ENCODE measurements at regions of chr1 and their contacts with region 1.

Region 1: GRCh38 chr1:229848752-229849677 is 218.0 kb upstream of the GALNT2 start:
- DNase-seq: no peak

Region 2: DNA sequence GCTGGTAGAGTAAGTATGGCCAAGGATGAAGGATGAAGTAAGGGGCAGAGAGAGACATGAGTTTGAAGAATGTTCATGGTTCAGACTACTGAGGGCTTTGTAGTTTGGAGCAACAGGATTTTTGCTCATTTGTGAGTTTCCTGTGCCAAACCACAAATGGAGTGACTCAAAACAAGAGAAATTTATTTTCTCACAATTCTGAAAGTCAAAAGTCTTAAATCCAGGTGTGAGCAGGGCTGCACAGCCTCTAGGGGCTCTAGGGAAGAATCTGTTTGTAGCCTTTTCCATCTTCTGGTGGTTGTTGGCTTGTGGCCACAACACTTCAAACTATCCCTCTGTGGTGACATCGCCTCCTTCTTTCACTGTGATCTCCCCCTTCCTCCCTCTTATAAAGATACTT is 1054.8 kb before region 1 on chr1:
- intact Hi-C with region 1: no loop called
- DNase-seq: no peak

Region 3: GRCh38 chr1:229756666-229757065 is 92.3 kb before region 1 on chr1:
- intact Hi-C with region 1: no loop called
- DNase-seq: no peak

Region 4: GRCh38 chr1:230084138-230084880 is 235.3 kb after region 1 on chr1:
- intact Hi-C with region 1: loop called (anchors 10 kb)
- DNase-seq: no peak

Region 5: DNA sequence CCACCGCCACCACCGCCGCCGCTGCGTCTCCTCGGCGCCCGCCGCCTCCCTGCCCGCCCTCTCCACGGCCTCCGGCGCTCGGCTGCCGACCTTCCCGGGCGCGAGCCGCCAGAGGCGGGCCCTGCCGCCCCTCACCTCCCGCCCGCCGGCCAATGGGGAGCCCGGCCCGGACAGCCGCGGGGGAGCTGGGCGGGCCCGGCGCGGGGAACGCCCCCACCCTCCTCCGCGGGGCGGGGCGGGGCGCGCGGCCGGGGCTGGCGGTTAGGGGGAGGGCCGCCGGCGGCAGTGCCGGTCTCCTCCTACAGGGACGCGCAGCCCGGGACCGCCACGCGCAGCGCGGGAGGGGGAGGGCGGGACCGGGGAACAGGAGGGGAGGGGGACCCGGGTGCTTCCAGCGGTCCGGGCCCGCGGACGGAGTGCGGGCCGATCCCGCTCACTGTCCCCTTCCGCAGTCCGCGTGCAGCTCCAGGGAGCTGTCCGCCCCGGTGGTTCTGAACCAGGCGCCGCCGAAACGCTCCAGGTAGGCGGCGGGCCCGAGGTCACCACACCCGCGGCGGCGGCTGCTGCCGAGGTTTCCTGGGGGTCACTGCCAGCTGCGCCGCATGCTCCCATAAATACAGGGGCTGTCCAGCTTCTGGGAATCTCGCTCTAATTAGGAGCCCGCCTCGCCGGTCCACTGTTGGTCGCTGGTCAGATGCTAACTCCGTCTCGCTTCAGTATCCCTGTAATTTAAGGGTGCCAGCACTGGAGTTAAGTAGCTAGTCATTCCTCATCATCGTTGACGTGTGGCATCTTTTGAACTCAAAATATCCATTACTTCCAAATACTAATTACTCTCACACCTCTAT is 577.5 kb after region 1 on chr1 and contains the start of gene PGBD5:
- intact Hi-C with region 1: no loop called
- DNase-seq: peak; percentile 80
- total RNA-seq, gene PGBD5: 14.0 TPM